CD8-positive, alpha-beta memory T cell (primary cell): ENCODE measurements at regions of chr5 and their contacts with region 1.

Region 1: DNA sequence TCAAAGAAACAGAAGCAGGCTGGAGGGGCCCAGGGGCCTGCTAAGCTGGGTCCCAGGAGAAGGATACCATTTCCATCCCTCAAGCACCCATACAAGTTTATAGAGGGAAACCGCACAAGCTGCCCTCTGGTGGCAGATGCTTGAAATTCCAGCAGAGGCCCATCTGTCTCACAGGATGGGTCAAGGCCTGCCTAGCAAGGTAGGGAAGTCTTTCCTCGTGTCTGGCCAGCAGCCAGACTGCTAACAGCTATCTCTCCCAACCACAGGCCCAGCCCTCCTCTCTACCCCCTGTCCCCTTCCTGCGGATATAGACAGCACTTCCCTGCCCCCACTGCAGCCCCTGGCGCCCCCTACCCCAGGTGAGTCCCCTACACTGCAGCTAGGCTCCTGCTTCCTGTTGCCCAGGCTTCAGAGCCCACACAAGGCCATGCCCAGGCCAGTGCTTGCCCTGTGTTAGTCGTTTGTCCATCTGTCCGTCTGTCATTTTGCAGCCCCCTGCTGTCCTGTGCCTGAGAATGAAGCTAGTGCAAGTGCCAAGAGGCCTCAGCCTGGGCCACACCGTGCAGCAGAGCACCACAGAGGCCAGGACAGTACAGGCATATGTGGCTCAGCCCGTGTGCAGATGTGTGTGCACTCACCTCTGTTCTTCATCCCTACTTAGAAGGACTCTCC is 26.2 kb downstream of the TCF7 start:
- DNase-seq: peak in 4 of 5 donors; percentile 47 to 73 (median 58)
- H3K4me3 ChIP-seq: no peak overlapping the region
- H3K4me3 Mint-ChIP-seq: peak overlapping the region in 2 of 7 donors; percentile 24 to 59
- H3K27ac ChIP-seq: peak overlapping the region; percentile 35
- H3K27ac Mint-ChIP-seq: peak overlapping the region; percentile 86 to 100 (median 94)
- H3K4me1 ChIP-seq: peaks cover 57% of the 10 kb centered on the region
- H3K4me1 Mint-ChIP-seq: peaks cover 65 to 97% (median 86%) of the 10 kb centered on the region in 3 donors
- H3K27me3 ChIP-seq: no peaks in the 10 kb centered on the region
- H3K27me3 Mint-ChIP-seq: no peaks in the 10 kb centered on the region

Region 2: GRCh38 chr5:134113902-134114875 is 26.5 kb before region 1 on chr5 and contains the start of gene TCF7:
- CTCF ChIA-PET with region 1: no interaction called
- POLR2A ChIA-PET with region 1: interaction called, 272 read pairs
- DNase-seq: peak; percentile 74 to 87 (median 80)
- H3K4me3 ChIP-seq: peak within 1 kb of the TSS; percentile 95
- H3K4me3 Mint-ChIP-seq: peak within 1 kb of the TSS; percentile 94 to 99 (median 98)
- H3K27ac ChIP-seq: peak within 1 kb of the TSS; percentile 62
- H3K27ac Mint-ChIP-seq: peak within 1 kb of the TSS; percentile 89 to 99 (median 96)
- H3K4me1 ChIP-seq: peaks cover 55% of the 10 kb centered on the region
- H3K4me1 Mint-ChIP-seq: peaks cover 54 to 71% (median 59%) of the 10 kb centered on the region in 3 donors
- H3K27me3 ChIP-seq: no peaks in the 10 kb centered on the region
- H3K27me3 Mint-ChIP-seq: no peaks in the 10 kb centered on the region
- total RNA-seq, gene TCF7: 85.2 to 89.7 TPM

Region 3: DNA sequence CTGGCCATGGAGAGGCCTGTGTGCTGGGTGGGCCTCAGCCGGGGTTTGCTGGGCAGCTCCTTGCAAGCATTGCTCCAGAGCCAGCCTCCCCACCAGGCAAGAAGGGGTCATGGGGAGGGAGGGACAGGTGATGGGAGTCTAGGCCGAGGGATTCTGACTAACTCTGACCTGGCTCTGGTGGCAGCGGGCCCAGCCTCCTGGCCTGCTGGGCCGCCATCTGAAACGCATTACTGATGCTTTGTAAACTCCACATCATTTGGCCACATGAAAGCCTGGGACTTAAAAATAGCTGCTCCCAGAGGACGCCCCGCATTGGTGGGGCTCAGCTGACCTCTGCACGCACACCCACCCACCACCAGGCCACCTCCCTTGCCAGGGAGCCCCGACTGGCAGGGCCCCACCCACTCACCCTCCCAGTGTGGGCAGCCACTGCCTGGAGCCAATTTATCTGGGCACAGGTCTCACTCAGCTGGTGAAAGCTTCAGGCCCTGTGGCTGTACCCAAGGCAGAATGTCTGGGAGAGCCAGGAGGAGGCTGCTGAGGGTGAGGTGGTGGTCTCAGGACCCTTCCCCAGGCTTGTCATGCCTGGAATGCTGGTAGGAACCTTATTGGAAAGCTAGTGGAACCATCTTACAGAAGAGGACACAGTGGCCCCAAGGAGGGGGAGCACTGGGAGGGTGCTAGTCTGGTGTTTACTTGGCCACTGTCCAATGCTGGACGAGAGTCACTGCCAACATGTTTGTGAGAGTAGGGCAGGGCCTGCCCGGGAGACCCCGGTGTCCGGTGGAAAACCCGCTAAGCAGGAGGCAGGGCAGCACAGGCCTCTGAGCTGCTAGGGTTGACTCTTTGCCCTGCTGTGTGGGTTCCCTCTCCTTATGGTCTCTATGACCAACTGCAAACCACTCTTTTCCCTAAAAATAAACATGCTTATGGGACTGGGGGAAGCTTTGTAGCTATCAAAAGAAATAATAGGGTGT is 15.3 kb before region 1 on chr5:
- CTCF ChIA-PET with region 1: interaction called, 40 read pairs
- POLR2A ChIA-PET with region 1: interaction called, 272 read pairs
- DNase-seq: no peak
- H3K4me3 ChIP-seq: peak overlapping the region; percentile 79
- H3K4me3 Mint-ChIP-seq: peak overlapping the region; percentile 91 to 99 (median 96)
- H3K27ac ChIP-seq: peak overlapping the region; percentile 9
- H3K27ac Mint-ChIP-seq: peak overlapping the region; percentile 92 to 100 (median 98)
- H3K4me1 ChIP-seq: peaks cover 100% of the 10 kb centered on the region
- H3K4me1 Mint-ChIP-seq: peaks cover 89 to 99% (median 99%) of the 10 kb centered on the region in 3 donors
- H3K27me3 ChIP-seq: no peaks in the 10 kb centered on the region
- H3K27me3 Mint-ChIP-seq: peaks cover 0 to 2% of the 10 kb centered on the region in 2 donors

Region 4: GRCh38 chr5:134225618-134226440 is 85.2 kb after region 1 on chr5 and contains the start of gene PPP2CA:
- CTCF ChIA-PET with region 1: no interaction called
- POLR2A ChIA-PET with region 1: no interaction called
- DNase-seq: peak; percentile 98 to 100 (median 99)
- H3K4me3 ChIP-seq: peak within 1 kb of the TSS; percentile 85
- H3K4me3 Mint-ChIP-seq: peak within 1 kb of the TSS; percentile 94 to 100 (median 96)
- H3K27ac ChIP-seq: peak within 1 kb of the TSS; percentile 99
- H3K27ac Mint-ChIP-seq: peak within 1 kb of the TSS; percentile 98 to 100 (median 99)
- H3K4me1 ChIP-seq: peaks cover 41% of the 10 kb centered on the region
- H3K4me1 Mint-ChIP-seq: peaks cover 46 to 59% (median 56%) of the 10 kb centered on the region in 3 donors
- H3K27me3 ChIP-seq: no peaks in the 10 kb centered on the region
- H3K27me3 Mint-ChIP-seq: peaks cover 0 to 3% of the 10 kb centered on the region in 2 donors
- total RNA-seq, gene PPP2CA: 189 to 210 TPM